HepG2 (cell line): ENCODE measurements at regions of chr12 and their contacts with region 1.

Region 1: GRCh38 chr12:11649703-11650521 is 438 bp downstream of the ETV6 start:
- DNase-seq: no peak
- ATAC-seq: peak; percentile 54
- H3K4me3 ChIP-seq: peak overlapping the region; percentile 80 to 95 (median 92)
- H3K27ac ChIP-seq: peak overlapping the region; percentile 88
- H3K4me1 ChIP-seq: peaks cover 31% of the 10 kb centered on the region
- H3K27me3 ChIP-seq: no peaks in the 10 kb centered on the region
- CTCF ChIP-seq: no peak
- EP300 ChIP-seq: no peak
- POLR2A ChIP-seq: no peak
- RAD21 ChIP-seq: no peak

Region 2: GRCh38 chr12:11705010-11705409 is 55.1 kb after region 1 on chr12:
- CTCF ChIA-PET with region 1: no interaction called
- POLR2A ChIA-PET with region 1: interaction called, 3 read pairs
- in situ Hi-C with region 1: no loop called
- intact Hi-C with region 1: loop called (anchors 10 kb)
- DNase-seq: peak; percentile 69
- ATAC-seq: no peak; the same call in 2 of the 3 replicates
- H3K4me3 ChIP-seq: no peak overlapping the region
- H3K27ac ChIP-seq: no peak overlapping the region
- H3K4me1 ChIP-seq: peaks cover 51% of the 10 kb centered on the region
- H3K27me3 ChIP-seq: no peaks in the 10 kb centered on the region
- CTCF ChIP-seq: no peak
- EP300 ChIP-seq: 0 out of 4 replicates have a peak, but pooled peaks of 1 of the 2 experiments have one; percentile 4
- POLR2A ChIP-seq: no peak
- RAD21 ChIP-seq: no peak

Region 3: DNA sequence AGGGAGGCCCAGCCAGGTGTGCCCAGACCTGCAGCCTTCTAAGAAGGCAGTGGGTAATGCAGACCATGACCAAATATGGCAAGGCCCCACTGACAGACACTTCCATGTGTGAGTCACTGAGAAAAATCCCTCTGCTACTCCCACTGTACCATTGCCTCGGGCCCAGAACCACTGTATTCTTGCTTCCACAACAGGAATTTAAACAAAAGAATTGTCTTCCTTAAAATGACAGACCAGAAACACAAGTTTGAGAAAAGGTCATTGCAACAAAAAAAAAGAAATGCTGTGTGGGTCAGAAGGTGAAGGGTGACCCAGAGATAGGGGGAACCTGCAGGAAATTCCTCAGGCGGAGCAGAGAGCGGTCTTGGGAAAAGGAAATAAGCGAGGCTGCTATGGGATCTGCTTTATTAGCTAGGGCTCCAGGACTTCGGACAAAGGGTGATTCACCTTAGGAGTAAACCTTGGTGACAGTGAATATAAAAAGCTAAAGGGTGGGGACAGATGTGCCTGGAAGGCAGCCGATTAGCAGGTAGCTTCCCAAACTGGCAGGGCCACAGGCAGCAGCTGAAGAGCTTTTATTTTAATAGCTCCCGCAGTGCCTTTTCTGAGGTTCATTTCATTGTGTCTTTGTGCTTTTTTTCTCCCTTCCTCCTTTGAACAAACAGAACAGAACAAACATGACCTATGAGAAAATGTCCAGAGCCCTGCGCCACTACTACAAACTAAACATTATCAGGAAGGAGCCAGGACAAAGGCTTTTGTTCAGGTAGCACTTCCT is 235.5 kb after region 1 on chr12:
- CTCF ChIA-PET with region 1: no interaction called
- POLR2A ChIA-PET with region 1: no interaction called
- in situ Hi-C with region 1: no loop called
- intact Hi-C with region 1: loop called (anchors 5 kb)
- DNase-seq: peak; percentile 94
- ATAC-seq: peak; percentile 91
- H3K4me3 ChIP-seq: peak overlapping the region; percentile 2 to 49 (median 13); a peak in 5 of 6 replicates
- H3K27ac ChIP-seq: peak overlapping the region; percentile 81
- H3K4me1 ChIP-seq: peaks cover 61% of the 10 kb centered on the region
- H3K27me3 ChIP-seq: no peaks in the 10 kb centered on the region
- CTCF ChIP-seq: no peak
- EP300 ChIP-seq: peak in 1 of 2 experiments; percentile 80; a peak in 2 of 4 replicates
- POLR2A ChIP-seq: no peak
- RAD21 ChIP-seq: no peak